ENCODE measurements at regions of chr6 and their contacts with region 1.

Region 1: GRCh38 chr6:30828027-30828960 is 56.0 kb upstream of the DDR1 start:
- DNase-seq: peak; percentile 76
- CTCF ChIP-seq: peak; percentile 89

Region 2: GRCh38 chr6:30793521-30794194 is 34.6 kb before region 1 on chr6:
- CTCF ChIA-PET with region 1: interaction called, 10 read pairs
- POLR2A ChIA-PET with region 1: no interaction called
- DNase-seq: peak; percentile 74
- CTCF ChIP-seq: no peak

Region 3: GRCh38 chr6:30883685-30884520 is 55.6 kb after region 1 on chr6 and contains the start of gene DDR1:
- CTCF ChIA-PET with region 1: interaction called, 30 read pairs
- POLR2A ChIA-PET with region 1: interaction called, 4 read pairs
- DNase-seq: peak; percentile 84
- CTCF ChIP-seq: no peak

Region 4: DNA sequence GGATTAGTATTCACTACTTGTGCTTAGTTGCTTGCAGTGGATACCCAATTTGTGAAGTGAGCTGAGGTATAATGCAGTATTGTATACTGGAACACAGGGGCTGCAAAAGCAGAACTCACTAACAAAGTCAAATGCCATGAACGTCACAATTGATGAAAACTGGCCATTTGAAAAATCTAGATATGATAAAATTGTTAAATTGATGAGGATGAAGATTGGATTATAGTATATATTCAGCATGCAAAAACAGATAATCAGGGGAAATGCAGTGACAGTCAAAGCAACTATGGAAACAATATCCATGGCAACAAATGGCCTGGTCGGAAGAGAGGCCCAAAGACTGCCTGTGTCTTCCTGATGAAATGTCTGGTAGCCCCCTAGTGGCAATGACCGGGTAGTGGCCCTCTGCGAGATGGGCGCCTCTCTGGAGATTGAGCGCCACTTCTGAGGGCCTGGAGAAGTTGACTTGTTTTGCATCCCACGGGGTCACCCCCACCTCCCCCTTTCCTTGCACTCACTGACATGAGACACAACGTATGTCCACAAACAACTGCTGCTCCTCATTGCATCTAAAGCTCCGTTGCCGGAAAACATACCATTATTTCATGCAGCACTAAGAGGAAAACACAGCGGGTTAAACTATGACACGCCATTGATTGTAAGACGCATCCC is 240.5 kb after region 1 on chr6:
- CTCF ChIA-PET with region 1: interaction called, 30 read pairs
- POLR2A ChIA-PET with region 1: no interaction called
- DNase-seq: peak; percentile 85
- CTCF ChIP-seq: peak; percentile 68

Region 5: DNA sequence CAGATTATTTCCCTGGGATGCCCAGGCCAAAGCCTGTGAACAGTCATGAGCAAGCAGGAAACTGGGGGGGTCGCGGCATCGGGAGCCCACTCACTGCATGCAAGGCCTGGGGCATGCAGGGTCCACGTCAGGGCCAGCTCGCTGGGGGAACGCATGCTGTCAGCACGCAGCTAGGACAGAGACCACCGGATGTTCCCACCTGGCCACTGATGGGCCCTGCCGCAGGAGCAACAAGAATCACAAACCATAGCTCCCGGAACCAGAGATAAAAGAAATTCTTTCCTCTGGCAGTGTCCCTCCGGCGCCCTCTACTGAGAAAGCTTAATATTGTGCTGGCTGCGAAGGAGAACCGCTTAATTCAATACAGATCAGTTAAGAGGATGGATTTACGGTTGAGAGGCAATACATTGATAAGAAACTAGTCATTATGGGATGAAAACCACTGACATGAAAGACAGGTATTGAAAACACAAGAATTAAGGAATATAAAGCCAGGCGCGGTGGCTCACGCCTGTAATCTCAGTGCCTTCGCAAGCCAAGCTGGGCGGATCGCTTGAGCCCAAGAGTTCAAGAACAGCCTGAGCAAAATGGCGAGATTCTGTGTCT is 251.5 kb after region 1 on chr6:
- CTCF ChIA-PET with region 1: interaction called, 29 read pairs
- POLR2A ChIA-PET with region 1: no interaction called
- DNase-seq: peak; percentile 69
- CTCF ChIP-seq: peak; percentile 78